Mammary epithelial cell (primary cell): ENCODE measurements at regions of chr5 and their contacts with region 1.

Region 1: DNA sequence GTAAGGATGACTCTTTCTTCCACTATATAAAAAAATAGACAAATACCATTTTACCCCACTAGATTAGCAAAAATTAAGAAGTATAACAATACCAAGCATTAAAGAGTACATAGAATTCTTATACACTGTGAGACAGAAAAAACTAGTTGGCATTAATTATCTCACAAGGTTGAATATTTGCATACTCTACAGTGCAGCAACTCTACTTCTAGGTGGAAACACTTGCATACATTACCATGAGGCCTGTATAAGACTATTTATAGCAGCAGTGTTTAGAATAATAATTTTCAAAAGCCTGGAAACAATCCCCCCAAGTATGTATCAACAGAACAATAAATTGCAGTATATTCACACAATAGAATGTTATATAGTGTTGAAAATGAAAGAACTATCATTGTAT is 19.0 kb upstream of the PURA start:
- DNase-seq: no peak
- H3K4me3 ChIP-seq: no peak overlapping the region
- H3K27ac ChIP-seq: no peak overlapping the region
- H3K4me1 ChIP-seq: no peaks in the 10 kb centered on the region
- H3K27me3 ChIP-seq: no peaks in the 10 kb centered on the region
- CTCF ChIP-seq: no peak

Region 2: DNA sequence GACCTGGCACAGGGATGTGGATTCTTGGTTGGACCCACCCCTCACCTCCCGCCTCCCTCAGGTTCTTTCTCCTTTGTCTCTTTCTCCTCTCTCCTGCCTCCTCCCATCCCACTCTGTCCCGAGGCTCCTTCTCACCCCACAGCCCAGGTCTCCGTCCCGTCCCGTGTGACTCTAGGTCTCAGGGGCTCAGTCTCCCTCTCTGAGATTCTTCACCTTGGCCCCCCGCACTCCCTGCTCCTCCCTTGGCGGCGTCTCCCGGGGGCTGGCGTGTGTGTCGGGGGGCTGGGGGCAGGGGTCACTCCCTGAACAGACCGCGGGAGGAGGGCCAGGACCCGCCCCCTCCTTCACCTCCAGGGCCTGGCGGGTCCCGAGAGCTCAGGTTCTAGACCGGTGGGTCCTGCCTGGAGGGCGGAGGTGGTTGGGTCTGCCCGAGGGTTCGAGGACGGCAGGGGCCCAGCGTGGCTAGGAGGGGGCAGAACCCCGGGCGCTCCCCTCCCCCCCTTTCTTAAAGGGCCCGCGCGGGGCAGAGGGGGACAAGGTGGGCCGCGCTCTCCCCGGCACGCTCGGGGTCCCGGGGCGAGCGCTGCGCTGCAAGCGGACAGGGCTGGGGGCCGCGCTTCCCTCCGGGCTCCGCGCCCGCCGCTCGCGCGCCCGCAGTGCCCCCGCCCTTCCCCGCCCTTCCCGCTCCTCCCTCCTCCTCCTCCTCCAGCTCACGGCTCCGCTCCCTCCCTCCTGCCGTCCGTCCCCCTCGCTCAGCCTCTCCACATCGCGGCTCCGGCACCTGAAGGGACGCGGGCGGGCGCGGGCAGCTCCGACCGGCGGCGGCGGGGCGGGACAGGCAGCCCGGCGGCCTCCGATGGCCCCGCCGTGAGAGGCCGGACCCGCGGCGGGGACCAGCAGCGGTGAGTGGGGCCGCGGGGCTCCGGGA is 299.6 kb before region 1 on chr5 and contains the start of gene PSD2:
- CTCF ChIA-PET with region 1: interaction called, 11 read pairs
- dilution Hi-C with region 1: no loop called
- in situ Hi-C with region 1: no loop called
- intact Hi-C with region 1: no loop called
- DNase-seq: peak; percentile 13
- H3K4me3 ChIP-seq: peak within 1 kb of the TSS in 2 of 3 experiments; percentile 41 to 42
- H3K27ac ChIP-seq: no peak within 1 kb of the TSS
- H3K4me1 ChIP-seq: peaks cover 3% of the 10 kb centered on the region
- H3K27me3 ChIP-seq: peaks cover 23% of the 10 kb centered on the region
- CTCF ChIP-seq: no peak
- total RNA-seq, gene PSD2: under 0.01 to 0.07 TPM